ENCODE measurements at regions of chr3 and their contacts with region 1.

Region 1: GRCh38 chr3:190224863-190225692 is 97.2 kb downstream of the CLDN1 start:
- DNase-seq: peak; percentile 78
- ATAC-seq: peak; percentile 73
- H3K4me3 ChIP-seq: no peak overlapping the region
- H3K27ac ChIP-seq: no peak overlapping the region
- H3K4me1 ChIP-seq: peaks cover 11% of the 10 kb centered on the region
- H3K27me3 ChIP-seq: no peaks in the 10 kb centered on the region
- CTCF ChIP-seq: peak; percentile 72

Region 2: DNA sequence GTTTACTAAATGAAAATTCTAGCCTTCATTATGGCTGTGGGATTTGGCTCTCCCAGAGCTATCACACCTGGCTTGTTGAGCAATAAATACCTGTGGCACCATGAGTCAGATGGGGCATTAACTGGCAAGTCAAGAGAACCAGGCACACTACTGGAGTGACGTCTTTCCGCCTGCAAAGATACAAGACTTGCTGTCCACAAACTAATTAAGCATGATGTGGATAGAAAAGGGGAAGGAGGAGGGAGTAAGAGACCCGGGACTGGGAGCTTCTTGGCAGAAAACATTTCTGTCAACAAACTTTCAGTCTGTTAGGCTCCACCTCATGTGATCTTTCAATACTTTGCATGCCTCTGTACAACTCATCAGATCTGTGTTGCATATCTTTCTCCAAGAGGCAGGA is 40.7 kb after region 1 on chr3:
- CTCF ChIA-PET with region 1: interaction called, 3 read pairs
- POLR2A ChIA-PET with region 1: no interaction called
- intact Hi-C with region 1: loop called (anchors 5 kb)
- DNase-seq: peak; percentile 89
- ATAC-seq: peak; percentile 92
- H3K4me3 ChIP-seq: no peak overlapping the region
- H3K27ac ChIP-seq: peak overlapping the region; percentile 51
- H3K4me1 ChIP-seq: peaks cover 19% of the 10 kb centered on the region
- H3K27me3 ChIP-seq: no peaks in the 10 kb centered on the region
- CTCF ChIP-seq: no peak

Region 3: GRCh38 chr3:190306513-190307165 is 81.6 kb after region 1 on chr3:
- CTCF ChIA-PET with region 1: no interaction called
- POLR2A ChIA-PET with region 1: no interaction called
- intact Hi-C with region 1: loop called (anchors 5 kb)
- DNase-seq: peak; percentile 66
- ATAC-seq: peak; percentile 62
- H3K4me3 ChIP-seq: 0 out of 2 replicates have a peak overlapping the region, but pooled peaks have one; percentile 5
- H3K27ac ChIP-seq: peak overlapping the region; percentile 80
- H3K4me1 ChIP-seq: peaks cover 60% of the 10 kb centered on the region
- H3K27me3 ChIP-seq: no peaks in the 10 kb centered on the region
- CTCF ChIP-seq: no peak

Region 4: GRCh38 chr3:191592105-191592504 is 1367.0 kb after region 1 on chr3:
- CTCF ChIA-PET with region 1: no interaction called
- POLR2A ChIA-PET with region 1: no interaction called
- intact Hi-C with region 1: no loop called
- DNase-seq: no peak
- ATAC-seq: no peak
- H3K4me3 ChIP-seq: no peak overlapping the region
- H3K27ac ChIP-seq: no peak overlapping the region
- H3K4me1 ChIP-seq: no peaks in the 10 kb centered on the region
- H3K27me3 ChIP-seq: peaks cover 10% of the 10 kb centered on the region; the same call in 1 of the 2 replicates
- CTCF ChIP-seq: no peak

Measured in PC-3 (cell line).